HepG2 (cell line): ENCODE measurements at regions of chr10 and their contacts with region 1.

Region 1: DNA sequence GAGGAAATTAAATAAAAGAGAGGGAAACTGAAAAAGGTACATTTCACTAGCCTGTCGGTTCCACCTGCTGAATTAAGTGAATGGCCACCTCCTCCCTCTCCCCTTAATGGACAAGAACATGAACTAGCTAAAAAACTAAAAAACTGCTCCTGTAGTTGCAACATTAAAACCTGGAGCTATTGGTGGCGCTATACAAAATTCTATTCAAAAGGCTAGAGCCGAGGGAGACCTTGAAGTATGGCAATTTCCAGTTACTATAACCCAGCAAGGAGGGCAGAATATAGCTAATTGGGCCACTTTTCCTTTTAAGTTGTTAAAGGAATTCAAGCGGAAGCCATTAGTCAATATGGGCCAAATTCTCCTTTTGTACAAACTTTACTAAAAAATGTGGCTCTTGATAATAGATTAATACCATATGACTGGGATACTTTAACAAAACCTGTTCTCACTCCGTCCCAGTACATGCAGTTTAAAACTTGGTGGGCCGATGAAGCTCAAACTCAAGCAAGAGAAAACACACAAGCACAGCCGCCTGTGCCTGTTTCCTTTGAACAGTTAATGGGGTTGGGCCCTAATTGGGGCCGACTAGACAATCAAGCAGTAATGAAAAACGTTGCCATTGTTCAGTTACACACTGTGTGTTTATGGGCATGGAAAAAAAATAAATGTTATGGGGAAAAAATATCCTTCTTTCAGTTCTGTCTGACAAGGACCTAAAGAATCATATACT is 6.5 kb upstream of the CHST3 start:
- DNase-seq: peak; percentile 44
- ATAC-seq: no peak
- H3K4me3 ChIP-seq: no peak overlapping the region
- H3K27ac ChIP-seq: no peak overlapping the region
- H3K4me1 ChIP-seq: peaks cover 29% of the 10 kb centered on the region
- H3K27me3 ChIP-seq: no peaks in the 10 kb centered on the region
- CTCF ChIP-seq: peak; percentile 26
- EP300 ChIP-seq: no peak
- POLR2A ChIP-seq: no peak
- RAD21 ChIP-seq: no peak

Region 2: DNA sequence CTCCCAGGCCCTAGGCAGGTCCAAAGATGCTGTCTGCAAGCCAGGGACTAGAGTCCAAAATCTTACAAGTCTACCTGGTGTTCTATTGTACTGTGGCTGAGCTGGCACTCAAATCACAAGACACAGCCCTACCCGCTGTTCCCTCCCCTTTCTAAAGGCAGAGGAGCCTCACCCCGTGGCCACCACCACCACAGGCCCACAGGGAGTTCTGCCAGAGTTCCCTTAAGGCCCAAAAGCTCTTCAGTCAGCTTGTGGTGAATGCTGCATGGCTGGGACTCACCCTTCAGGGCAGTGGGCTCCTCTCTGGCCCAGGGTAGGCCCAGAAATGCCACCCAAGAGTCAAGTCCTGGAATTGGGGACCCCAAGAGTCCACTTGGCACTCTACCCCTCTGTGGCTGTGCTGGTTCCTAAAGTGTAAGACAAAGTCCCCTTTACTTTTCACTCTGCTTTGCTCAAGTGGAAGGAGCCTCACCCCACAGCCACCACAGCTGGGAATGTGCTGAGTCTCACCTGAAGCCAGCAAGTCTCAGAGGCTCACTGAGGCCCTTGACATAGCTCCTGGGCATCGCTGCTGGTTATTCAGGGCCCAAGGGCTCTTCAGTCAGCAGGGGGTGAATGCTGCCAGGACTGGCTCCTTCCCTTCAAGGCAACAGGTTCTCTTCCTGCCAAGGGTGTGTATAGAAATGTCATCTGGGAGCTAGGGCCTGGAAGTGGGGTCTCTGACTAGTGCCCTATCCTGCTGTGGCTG is 57.9 kb before region 1 on chr10:
- CTCF ChIA-PET with region 1: interaction called, 4 read pairs
- POLR2A ChIA-PET with region 1: no interaction called
- in situ Hi-C with region 1: no loop called
- intact Hi-C with region 1: loop called (anchors 5 kb)
- DNase-seq: no peak
- ATAC-seq: peak; percentile 31; the same call in 2 of the 3 replicates
- H3K4me3 ChIP-seq: no peak overlapping the region
- H3K27ac ChIP-seq: no peak overlapping the region
- H3K4me1 ChIP-seq: peaks cover 17% of the 10 kb centered on the region; the same call in 1 of the 2 replicates
- H3K27me3 ChIP-seq: peaks cover 0 to 2% of the 10 kb centered on the region in 2 experiments; a peak in 1 of 5 replicates
- CTCF ChIP-seq: no peak
- EP300 ChIP-seq: no peak
- POLR2A ChIP-seq: no peak
- RAD21 ChIP-seq: no peak

Region 3: GRCh38 chr10:71985542-71986250 is 28.0 kb after region 1 on chr10:
- CTCF ChIA-PET with region 1: no interaction called
- POLR2A ChIA-PET with region 1: interaction called, 15 read pairs
- in situ Hi-C with region 1: no loop called
- intact Hi-C with region 1: loop called (anchors 2 kb)
- DNase-seq: no peak
- ATAC-seq: no peak
- H3K4me3 ChIP-seq: peak overlapping the region in 1 of 3 experiments; percentile 41; a peak in 1 of 6 replicates
- H3K27ac ChIP-seq: peak overlapping the region; percentile 88
- H3K4me1 ChIP-seq: peaks cover 86% of the 10 kb centered on the region
- H3K27me3 ChIP-seq: no peaks in the 10 kb centered on the region
- CTCF ChIP-seq: no peak
- EP300 ChIP-seq: no peak
- POLR2A ChIP-seq: no peak
- RAD21 ChIP-seq: no peak

Region 4: GRCh38 chr10:72215652-72216549 is 258.2 kb after region 1 on chr10 and contains the starts of genes ANAPC16 and ASCC1:
- CTCF ChIA-PET with region 1: no interaction called
- POLR2A ChIA-PET with region 1: no interaction called
- in situ Hi-C with region 1: no loop called
- intact Hi-C with region 1: loop called (anchors 10 kb)
- DNase-seq: peak; percentile 85
- ATAC-seq: peak; percentile 93
- H3K4me3 ChIP-seq: peak within 1 kb of the TSS; percentile 82 to 98 (median 83)
- H3K27ac ChIP-seq: peak within 1 kb of the TSS; percentile 99
- H3K4me1 ChIP-seq: peaks cover 54% of the 10 kb centered on the region
- H3K27me3 ChIP-seq: no peaks in the 10 kb centered on the region
- CTCF ChIP-seq: peak; percentile 27; the same call in 1 of the 2 replicates
- EP300 ChIP-seq: peak; percentile 31 to 61; a peak in 2 of 4 replicates
- POLR2A ChIP-seq: peak; percentile 94 to 96
- RAD21 ChIP-seq: peak; percentile 44; the same call in 1 of the 2 replicates
- total RNA-seq, gene ANAPC16: 74.8 and 95.6 TPM in 2 replicates
- total RNA-seq, gene ASCC1: 30.1 and 51.0 TPM in 2 replicates